CD4-positive, alpha-beta T cell (primary cell): ENCODE measurements at regions of chr2 and their contacts with region 1.

Region 1: DNA sequence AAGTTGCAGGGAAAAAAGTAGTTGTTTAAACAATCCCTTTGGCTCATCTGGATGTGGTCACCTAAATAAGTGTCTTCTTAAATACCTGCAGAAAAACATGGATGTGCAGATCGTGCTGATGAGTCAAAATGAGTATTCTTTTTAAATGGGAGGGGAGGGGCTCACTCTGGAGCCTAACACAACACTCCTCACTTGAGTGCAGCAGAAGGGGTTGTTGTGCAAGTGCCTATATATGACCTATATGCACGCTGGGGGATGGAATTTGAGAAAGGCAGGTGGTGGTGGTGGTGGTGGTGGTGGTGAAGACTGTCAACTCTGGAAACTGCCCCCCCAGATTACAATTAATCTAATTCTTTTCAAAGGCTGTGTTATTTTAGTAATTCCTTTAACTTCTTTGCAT is 77.9 kb upstream of the FAM124B start:
- DNase-seq: no peak
- ATAC-seq: no peak
- H3K4me3 ChIP-seq: no peak overlapping the region
- H3K4me3 Mint-ChIP-seq: no peak overlapping the region
- H3K27ac ChIP-seq: no peak overlapping the region
- H3K27ac Mint-ChIP-seq: peak overlapping the region; percentile 60
- H3K4me1 ChIP-seq: no peaks in the 10 kb centered on the region
- H3K4me1 Mint-ChIP-seq: no peaks in the 10 kb centered on the region
- H3K27me3 ChIP-seq: no peaks in the 10 kb centered on the region
- H3K27me3 Mint-ChIP-seq: no peaks in the 10 kb centered on the region
- CTCF ChIP-seq: no peak

Region 2: DNA sequence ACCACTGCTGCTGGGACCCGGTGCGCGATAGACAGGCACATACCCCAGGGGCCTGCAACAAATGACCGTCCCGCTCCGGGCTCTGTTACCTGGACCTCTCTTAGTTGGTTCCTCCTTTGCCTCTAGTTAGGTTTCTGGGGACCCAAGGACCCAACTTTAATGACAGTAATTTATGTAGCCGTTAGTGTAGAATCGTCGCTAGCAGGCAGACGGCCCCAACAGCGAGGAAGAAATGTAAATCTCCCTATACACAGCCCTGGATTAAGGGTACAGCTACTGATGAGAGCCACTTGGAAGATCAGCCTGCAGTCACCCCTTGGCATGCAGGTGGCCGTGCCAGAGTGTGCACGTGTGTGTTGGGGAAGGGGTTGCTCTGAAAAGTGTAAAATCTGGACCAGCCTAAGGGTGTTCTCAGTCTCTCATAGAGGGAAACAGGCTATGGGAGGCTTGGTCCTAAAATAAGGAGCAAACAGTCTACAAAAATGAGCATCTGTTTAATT is 439.8 kb before region 1 on chr2:
- CTCF ChIA-PET with region 1: no interaction called
- POLR2A ChIA-PET with region 1: no interaction called
- intact Hi-C with region 1: no loop called
- DNase-seq: no peak
- ATAC-seq: no peak
- H3K4me3 ChIP-seq: peak overlapping the region; percentile 40
- H3K4me3 Mint-ChIP-seq: peak overlapping the region; percentile 73
- H3K27ac ChIP-seq: no peak overlapping the region
- H3K27ac Mint-ChIP-seq: no peak overlapping the region
- H3K4me1 ChIP-seq: peaks cover 12% of the 10 kb centered on the region
- H3K4me1 Mint-ChIP-seq: peaks cover 23% of the 10 kb centered on the region
- H3K27me3 ChIP-seq: peaks cover 12 to 25% of the 10 kb centered on the region in 2 experiments
- H3K27me3 Mint-ChIP-seq: peaks cover 57% of the 10 kb centered on the region
- CTCF ChIP-seq: no peak

Region 3: GRCh38 chr2:224650815-224651439 is 171.1 kb after region 1 on chr2:
- CTCF ChIA-PET with region 1: no interaction called
- POLR2A ChIA-PET with region 1: no interaction called
- intact Hi-C with region 1: loop called in 1 of 2 experiments (anchors 10 kb)
- DNase-seq: peak in 4 of 14 experiments; percentile 7 to 74 (median 64)
- ATAC-seq: peak; percentile 57
- H3K4me3 ChIP-seq: no peak overlapping the region
- H3K4me3 Mint-ChIP-seq: no peak overlapping the region
- H3K27ac ChIP-seq: no peak overlapping the region
- H3K27ac Mint-ChIP-seq: no peak overlapping the region
- H3K4me1 ChIP-seq: no peaks in the 10 kb centered on the region
- H3K4me1 Mint-ChIP-seq: peaks cover 4% of the 10 kb centered on the region
- H3K27me3 ChIP-seq: no peaks in the 10 kb centered on the region
- H3K27me3 Mint-ChIP-seq: peaks cover 7% of the 10 kb centered on the region
- CTCF ChIP-seq: peak; percentile 87